ENCODE measurements at regions of chr1 and their contacts with region 1.

Region 1: GRCh38 chr1:55214212-55215005 is 755 bp downstream of the USP24 start:
- DNase-seq: peak; percentile 51
- ATAC-seq: peak; percentile 6
- H3K4me3 Mint-ChIP-seq: peak overlapping the region; percentile 83
- H3K27ac Mint-ChIP-seq: peak overlapping the region; percentile 86
- H3K4me1 Mint-ChIP-seq: peaks cover 65% of the 10 kb centered on the region
- H3K27me3 Mint-ChIP-seq: no peaks in the 10 kb centered on the region
- CTCF ChIP-seq: no peak

Region 2: GRCh38 chr1:55015731-55016620 is 198.4 kb before region 1 on chr1:
- CTCF ChIA-PET with region 1: no interaction called
- POLR2A ChIA-PET with region 1: no interaction called
- intact Hi-C with region 1: no loop called
- DNase-seq: no peak
- ATAC-seq: no peak
- H3K4me3 Mint-ChIP-seq: no peak overlapping the region
- H3K27ac Mint-ChIP-seq: no peak overlapping the region
- H3K4me1 Mint-ChIP-seq: no peaks in the 10 kb centered on the region
- H3K27me3 Mint-ChIP-seq: peaks cover 7% of the 10 kb centered on the region
- CTCF ChIP-seq: no peak

Region 3: GRCh38 chr1:55035904-55036303 is 178.5 kb before region 1 on chr1:
- CTCF ChIA-PET with region 1: no interaction called
- POLR2A ChIA-PET with region 1: no interaction called
- intact Hi-C with region 1: no loop called
- DNase-seq: no peak
- ATAC-seq: peak; percentile 27
- H3K4me3 Mint-ChIP-seq: no peak overlapping the region
- H3K27ac Mint-ChIP-seq: no peak overlapping the region
- H3K4me1 Mint-ChIP-seq: peaks cover 3% of the 10 kb centered on the region
- H3K27me3 Mint-ChIP-seq: peaks cover 51% of the 10 kb centered on the region
- CTCF ChIP-seq: no peak

Region 4: GRCh38 chr1:55089683-55090082 is 124.7 kb before region 1 on chr1:
- CTCF ChIA-PET with region 1: no interaction called
- POLR2A ChIA-PET with region 1: no interaction called
- intact Hi-C with region 1: no loop called
- DNase-seq: no peak
- ATAC-seq: no peak
- H3K4me3 Mint-ChIP-seq: no peak overlapping the region
- H3K27ac Mint-ChIP-seq: peak overlapping the region; percentile 46
- H3K4me1 Mint-ChIP-seq: peaks cover 9% of the 10 kb centered on the region
- H3K27me3 Mint-ChIP-seq: no peaks in the 10 kb centered on the region
- CTCF ChIP-seq: no peak

Region 5: GRCh38 chr1:55140546-55140983 is 73.8 kb before region 1 on chr1:
- CTCF ChIA-PET with region 1: interaction called, 21 read pairs
- POLR2A ChIA-PET with region 1: interaction called, 3 read pairs
- intact Hi-C with region 1: loop called (anchors 5 kb)
- DNase-seq: peak; percentile 85
- ATAC-seq: peak; percentile 98
- H3K4me3 Mint-ChIP-seq: no peak overlapping the region
- H3K27ac Mint-ChIP-seq: peak overlapping the region; percentile 43
- H3K4me1 Mint-ChIP-seq: peaks cover 10% of the 10 kb centered on the region
- H3K27me3 Mint-ChIP-seq: no peaks in the 10 kb centered on the region
- CTCF ChIP-seq: peak; percentile 77

Region 6: DNA sequence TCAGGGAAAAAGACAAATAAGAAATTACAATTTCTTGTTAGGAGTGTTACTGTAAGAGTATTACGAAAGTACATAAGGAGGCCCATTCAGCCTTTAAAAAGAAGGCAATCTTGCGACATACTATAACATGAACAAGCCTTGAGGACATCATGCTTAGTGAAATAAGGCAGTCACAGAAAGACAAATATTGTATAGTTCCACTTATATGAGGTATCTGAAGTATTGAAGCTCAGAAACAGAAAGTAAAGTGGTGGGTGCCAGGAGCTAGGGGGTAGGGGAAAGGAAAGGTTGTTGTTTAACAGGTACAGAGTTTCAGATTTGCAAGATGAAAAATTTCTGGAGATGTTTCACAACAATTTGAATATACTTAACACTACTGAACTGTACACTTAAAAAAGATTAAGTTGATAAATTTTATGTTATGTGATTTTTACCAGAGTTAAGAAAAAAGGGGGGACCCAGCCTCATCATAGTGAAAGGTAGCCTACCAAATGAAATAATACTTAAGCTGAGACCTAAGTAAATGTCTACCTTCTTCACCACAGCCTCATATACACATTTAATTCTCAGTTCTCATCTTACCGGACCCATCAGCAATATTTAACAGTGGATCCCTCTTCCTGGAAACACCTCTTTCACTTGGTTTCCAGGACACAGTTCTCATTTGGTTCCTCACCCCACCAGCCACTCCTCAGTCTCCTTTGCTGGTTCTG is 18.7 kb before region 1 on chr1:
- CTCF ChIA-PET with region 1: interaction called, 11 read pairs
- POLR2A ChIA-PET with region 1: interaction called, 5 read pairs
- intact Hi-C with region 1: no loop called
- DNase-seq: no peak
- ATAC-seq: peak; percentile 75
- H3K4me3 Mint-ChIP-seq: peak overlapping the region; percentile 10
- H3K27ac Mint-ChIP-seq: peak overlapping the region; percentile 88
- H3K4me1 Mint-ChIP-seq: peaks cover 69% of the 10 kb centered on the region
- H3K27me3 Mint-ChIP-seq: no peaks in the 10 kb centered on the region
- CTCF ChIP-seq: no peak

Region 7: GRCh38 chr1:55257958-55258357 is 43.5 kb after region 1 on chr1:
- CTCF ChIA-PET with region 1: no interaction called
- POLR2A ChIA-PET with region 1: interaction called, 3 read pairs
- intact Hi-C with region 1: loop called (anchors 5 kb)
- DNase-seq: peak; percentile 84
- ATAC-seq: peak; percentile 90
- H3K4me3 Mint-ChIP-seq: peak overlapping the region; percentile 15
- H3K27ac Mint-ChIP-seq: peak overlapping the region; percentile 4
- H3K4me1 Mint-ChIP-seq: peaks cover 25% of the 10 kb centered on the region
- H3K27me3 Mint-ChIP-seq: no peaks in the 10 kb centered on the region
- CTCF ChIP-seq: no peak

Measured in activated CD8-positive, alpha-beta T cell treated with anti-CD3 and anti-CD28 coated beads for 36 hours (primary cell).